Colonic mucosa (tissue), 4 donors: ENCODE measurements at regions of chr9 and their contacts with region 1.

Region 1: GRCh38 chr9:4228606-4229005 is 71.3 kb downstream of the GLIS3 start:
- DNase-seq: peak; percentile 38
- H3K4me3 ChIP-seq: no peak overlapping the region
- H3K27ac ChIP-seq: no peak overlapping the region
- H3K4me1 ChIP-seq: no peaks in the 10 kb centered on the region
- H3K27me3 ChIP-seq: no peaks in the 10 kb centered on the region
- CTCF ChIP-seq: peak; percentile 41

Region 2: DNA sequence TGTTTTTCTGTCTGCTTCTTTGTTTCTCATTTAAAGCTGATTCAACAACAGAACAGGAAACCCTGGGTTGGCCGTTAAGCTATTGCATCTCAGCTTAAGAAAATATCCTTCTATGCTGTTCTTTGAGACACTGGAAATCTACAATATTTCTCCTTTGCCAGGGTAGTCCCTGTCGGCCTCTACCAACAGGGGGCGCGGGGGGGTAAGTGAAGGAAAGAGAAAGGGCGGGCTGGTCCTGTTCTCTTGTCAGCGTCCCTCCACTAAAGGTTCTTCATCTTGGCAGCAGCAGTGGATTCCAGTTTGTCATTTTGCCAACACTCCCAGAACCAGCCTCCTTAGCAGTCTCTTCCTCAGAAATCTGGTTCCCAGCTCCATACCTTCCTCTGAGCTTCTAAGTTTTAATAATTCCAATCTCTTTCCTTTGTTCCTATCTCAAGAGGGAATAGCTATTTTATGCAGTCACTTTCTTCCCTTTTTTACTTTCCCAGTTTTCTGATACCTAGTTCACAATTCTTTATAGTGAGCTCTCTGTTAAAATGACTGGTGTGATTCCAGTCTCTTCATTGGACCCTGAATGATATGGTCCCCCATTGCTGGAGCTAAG is 151.0 kb before region 1 on chr9:
- intact Hi-C with region 1: loop called (anchors 5 kb)
- DNase-seq: peak; percentile 93
- H3K4me3 ChIP-seq: no peak overlapping the region
- H3K27ac ChIP-seq: no peak overlapping the region
- H3K4me1 ChIP-seq: no peaks in the 10 kb centered on the region
- H3K27me3 ChIP-seq: no peaks in the 10 kb centered on the region
- CTCF ChIP-seq: peak; percentile 69

Region 3: DNA sequence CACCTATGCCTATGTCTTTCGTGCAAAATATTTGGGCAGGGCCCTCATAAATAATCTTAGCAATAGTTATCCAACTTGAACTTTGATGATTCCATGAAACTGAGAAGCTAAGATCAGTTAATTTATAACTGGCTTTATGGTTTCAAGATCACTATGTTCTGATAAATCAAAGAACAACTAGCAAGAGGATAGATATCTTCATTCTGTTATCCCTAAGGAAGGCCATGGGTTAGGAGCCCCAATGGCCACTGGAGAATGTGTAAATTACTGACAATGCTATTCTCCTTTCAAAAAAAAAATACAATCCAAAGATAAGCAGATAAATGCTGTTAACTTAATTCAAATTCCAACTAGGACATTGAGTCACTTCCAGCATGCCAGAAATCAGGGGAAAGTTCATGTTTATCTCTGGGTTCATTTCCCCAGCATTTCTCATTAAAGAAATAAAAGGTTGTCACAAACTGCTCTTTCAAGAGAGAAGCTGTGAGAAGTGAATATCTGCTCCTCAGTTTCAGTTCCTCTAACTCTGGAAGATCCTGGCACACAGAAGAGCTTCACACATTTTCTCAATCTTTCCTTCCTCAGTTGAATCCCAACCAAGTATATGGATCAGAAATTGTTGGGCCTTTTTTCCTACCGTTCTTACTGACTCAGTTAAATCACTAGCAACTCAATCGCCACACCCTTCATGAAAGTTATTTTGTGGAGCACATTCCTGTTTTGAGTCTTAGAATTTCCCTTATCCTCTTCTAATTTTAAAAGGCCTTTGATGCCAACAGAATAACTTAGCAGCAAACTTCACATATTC is 202.1 kb after region 1 on chr9:
- intact Hi-C with region 1: no loop called
- DNase-seq: no peak
- H3K4me3 ChIP-seq: no peak overlapping the region
- H3K27ac ChIP-seq: no peak overlapping the region
- H3K4me1 ChIP-seq: no peaks in the 10 kb centered on the region
- H3K27me3 ChIP-seq: no peaks in the 10 kb centered on the region
- CTCF ChIP-seq: no peak